Aorta (tissue), 5 donors: ENCODE measurements at regions of chr17 and their contacts with region 1.

Region 1: DNA sequence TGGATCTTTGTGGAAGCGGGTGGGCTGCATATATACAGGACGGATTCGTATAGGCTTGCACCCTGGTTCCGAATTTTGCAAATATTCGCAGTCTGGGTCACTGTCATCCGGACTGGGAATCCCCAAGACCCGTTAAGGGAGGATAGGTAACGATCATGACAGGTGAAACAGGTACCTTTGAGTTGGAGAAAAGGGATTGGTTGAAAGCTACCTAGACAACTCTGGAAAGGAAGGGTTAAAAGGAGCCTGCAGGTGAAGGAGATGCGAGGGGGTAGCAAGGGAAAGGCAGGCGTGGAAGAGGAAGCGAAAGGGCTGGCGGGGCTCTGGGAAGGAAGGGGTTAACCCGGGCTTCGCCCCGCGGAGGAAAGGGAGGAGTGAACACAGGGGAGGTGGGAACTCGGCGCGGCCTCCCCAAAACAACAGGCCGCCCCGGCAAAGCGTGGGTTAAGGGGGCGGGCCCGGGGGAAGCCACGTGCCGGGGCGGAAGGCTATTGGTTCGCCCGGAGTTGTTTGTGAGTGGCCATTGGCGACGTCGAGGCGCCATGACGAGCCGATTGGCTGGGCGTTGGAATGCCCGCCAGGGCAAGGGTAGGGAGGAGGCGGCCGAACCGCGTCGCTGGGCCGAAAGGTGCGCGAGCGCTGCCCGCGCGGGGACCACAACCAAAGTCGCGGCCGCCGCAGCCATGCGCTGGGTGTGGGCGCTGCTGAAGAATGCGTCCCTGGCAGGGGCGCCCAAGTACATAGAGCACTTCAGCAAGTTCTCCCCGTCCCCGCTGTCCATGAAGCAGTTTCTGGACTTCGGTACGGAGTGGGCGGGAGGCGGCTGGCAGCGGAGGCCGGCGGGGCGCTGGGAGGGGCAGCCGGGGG is at the start of gene PDK2:
- DNase-seq: peak; percentile 98
- ATAC-seq: peak; percentile 97
- H3K4me3 ChIP-seq: peak within 1 kb of the TSS; percentile 74 to 81
- H3K27ac ChIP-seq: peak within 1 kb of the TSS in 1 of 2 donors; percentile 55
- H3K4me1 ChIP-seq: no peaks in the 10 kb centered on the region
- H3K27me3 ChIP-seq: no peaks in the 10 kb centered on the region
- total RNA-seq, gene PDK2: 39.4 to 42.8 TPM

Region 2: GRCh38 chr17:50148226-50149090 is 53.5 kb after region 1 on chr17:
- intact Hi-C with region 1: loop called in 1 of 2 experiments (anchors 5 kb)
- DNase-seq: peak; percentile 83 to 91
- ATAC-seq: peak; percentile 6
- H3K4me3 ChIP-seq: peak overlapping the region; percentile 75 to 80
- H3K27ac ChIP-seq: peak overlapping the region in 1 of 2 donors; percentile 50
- H3K4me1 ChIP-seq: peaks cover 0 to 3% of the 10 kb centered on the region in 2 donors
- H3K27me3 ChIP-seq: no peaks in the 10 kb centered on the region

Region 3: GRCh38 chr17:50289991-50290702 is 195.2 kb after region 1 on chr17:
- intact Hi-C with region 1: loop called (anchors 1 to 5 kb)
- DNase-seq: peak; percentile 90
- ATAC-seq: peak; percentile 95
- H3K4me3 ChIP-seq: peak overlapping the region; percentile 6 to 29
- H3K27ac ChIP-seq: peak overlapping the region; percentile 96
- H3K4me1 ChIP-seq: no peaks in the 10 kb centered on the region
- H3K27me3 ChIP-seq: no peaks in the 10 kb centered on the region

Region 4: GRCh38 chr17:50297407-50297865 is 202.4 kb after region 1 on chr17:
- intact Hi-C with region 1: loop called in 1 of 2 experiments (anchors 5 kb)
- DNase-seq: peak; percentile 80 to 92
- ATAC-seq: peak; percentile 91
- H3K4me3 ChIP-seq: no peak overlapping the region
- H3K27ac ChIP-seq: no peak overlapping the region
- H3K4me1 ChIP-seq: no peaks in the 10 kb centered on the region
- H3K27me3 ChIP-seq: no peaks in the 10 kb centered on the region